Activated T-helper 2 cell treated with anti-CD3 and anti-CD28 coated beads, Interferon-gamma antibody, Interleukin-2, Interleukin-4, amounts not matched to agents 10 μg/mL and 5 μg/mL and 100 μg/mL, durations not matched to agents 14 hours and 24 hours and 36 hours (primary cell): ENCODE measurements at regions of chr9 and their contacts with region 1.

Region 1: GRCh38 chr9:129413537-129414376 is 207.1 kb downstream of the C9orf50 start:
- DNase-seq: peak; percentile 97
- H3K4me3 Mint-ChIP-seq: peak overlapping the region; percentile 78
- H3K27ac Mint-ChIP-seq: peak overlapping the region; percentile 96
- H3K4me1 Mint-ChIP-seq: peaks cover 6% of the 10 kb centered on the region
- H3K27me3 Mint-ChIP-seq: no peaks in the 10 kb centered on the region

Region 2: GRCh38 chr9:129110740-129111527 is 302.8 kb before region 1 on chr9 and contains the starts of genes CRAT and PTPA:
- intact Hi-C with region 1: loop called (anchors 1 kb)
- DNase-seq: peak; percentile 90
- H3K4me3 Mint-ChIP-seq: peak within 1 kb of the TSS; percentile 95
- H3K27ac Mint-ChIP-seq: peak within 1 kb of the TSS; percentile 96
- H3K4me1 Mint-ChIP-seq: peaks cover 21% of the 10 kb centered on the region
- H3K27me3 Mint-ChIP-seq: no peaks in the 10 kb centered on the region
- total RNA-seq, gene CRAT: 13.6 and 14.3 TPM in 2 replicates
- total RNA-seq, gene PTPA: 106 and 112 TPM in 2 replicates

Region 3: GRCh38 chr9:129139993-129140396 is 273.8 kb before region 1 on chr9:
- intact Hi-C with region 1: loop called (anchors 1 kb)
- DNase-seq: peak; percentile 77
- H3K4me3 Mint-ChIP-seq: peak overlapping the region; percentile 86
- H3K27ac Mint-ChIP-seq: peak overlapping the region; percentile 97
- H3K4me1 Mint-ChIP-seq: peaks cover 37% of the 10 kb centered on the region
- H3K27me3 Mint-ChIP-seq: no peaks in the 10 kb centered on the region

Region 4: GRCh38 chr9:129460323-129461261 is 46.8 kb after region 1 on chr9:
- intact Hi-C with region 1: loop called (anchors 2 kb)
- DNase-seq: peak; percentile 81
- H3K4me3 Mint-ChIP-seq: peak overlapping the region; percentile 74
- H3K27ac Mint-ChIP-seq: peak overlapping the region; percentile 88
- H3K4me1 Mint-ChIP-seq: peaks cover 32% of the 10 kb centered on the region
- H3K27me3 Mint-ChIP-seq: peaks cover 3% of the 10 kb centered on the region

Region 5: DNA sequence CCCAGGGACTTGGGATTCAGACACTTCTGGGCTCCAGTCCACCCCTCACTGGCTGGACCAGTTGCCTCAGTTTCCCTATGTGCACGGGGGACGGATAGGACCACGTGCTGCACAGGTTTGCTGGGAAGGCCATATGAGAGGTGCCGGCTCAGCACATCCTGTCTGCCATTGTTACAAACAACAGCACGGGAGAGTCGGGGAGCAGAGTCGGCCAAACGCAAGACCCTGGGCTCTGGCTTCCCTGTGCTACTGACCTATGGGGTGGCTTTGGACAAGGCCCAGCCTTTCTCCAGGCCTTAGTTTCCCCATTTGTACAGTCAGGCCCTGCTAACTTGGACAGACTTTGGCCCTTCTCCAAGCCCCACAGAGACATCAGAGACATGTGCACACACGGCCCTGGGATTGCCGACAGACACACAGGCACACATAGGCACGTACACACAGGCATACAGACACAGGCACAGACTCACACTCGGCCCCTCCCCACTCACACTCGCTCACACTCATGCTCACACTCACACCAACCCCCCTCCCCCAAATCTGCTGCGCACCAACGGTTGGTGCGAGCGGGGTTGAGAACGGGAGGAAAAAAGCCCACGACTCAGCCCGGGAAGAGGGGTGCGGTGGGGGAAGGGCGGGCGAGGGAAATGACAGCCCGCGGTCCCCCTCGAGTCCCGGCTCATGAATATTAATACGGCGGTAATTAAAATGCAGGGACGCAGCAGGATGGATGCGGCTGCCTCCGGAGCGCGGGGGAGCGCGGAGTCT is 74.1 kb after region 1 on chr9:
- intact Hi-C with region 1: loop called (anchors 2 kb)
- DNase-seq: peak; percentile 28
- H3K4me3 Mint-ChIP-seq: peak overlapping the region; percentile 91
- H3K27ac Mint-ChIP-seq: peak overlapping the region; percentile 100
- H3K4me1 Mint-ChIP-seq: peaks cover 52% of the 10 kb centered on the region
- H3K27me3 Mint-ChIP-seq: no peaks in the 10 kb centered on the region

Region 6: GRCh38 chr9:129584136-129584535 is 170.4 kb after region 1 on chr9:
- intact Hi-C with region 1: loop called (anchors 5 kb)
- DNase-seq: peak; percentile 61
- H3K4me3 Mint-ChIP-seq: no peak overlapping the region
- H3K27ac Mint-ChIP-seq: peak overlapping the region; percentile 77
- H3K4me1 Mint-ChIP-seq: peaks cover 67% of the 10 kb centered on the region
- H3K27me3 Mint-ChIP-seq: peaks cover 5% of the 10 kb centered on the region

Region 7: DNA sequence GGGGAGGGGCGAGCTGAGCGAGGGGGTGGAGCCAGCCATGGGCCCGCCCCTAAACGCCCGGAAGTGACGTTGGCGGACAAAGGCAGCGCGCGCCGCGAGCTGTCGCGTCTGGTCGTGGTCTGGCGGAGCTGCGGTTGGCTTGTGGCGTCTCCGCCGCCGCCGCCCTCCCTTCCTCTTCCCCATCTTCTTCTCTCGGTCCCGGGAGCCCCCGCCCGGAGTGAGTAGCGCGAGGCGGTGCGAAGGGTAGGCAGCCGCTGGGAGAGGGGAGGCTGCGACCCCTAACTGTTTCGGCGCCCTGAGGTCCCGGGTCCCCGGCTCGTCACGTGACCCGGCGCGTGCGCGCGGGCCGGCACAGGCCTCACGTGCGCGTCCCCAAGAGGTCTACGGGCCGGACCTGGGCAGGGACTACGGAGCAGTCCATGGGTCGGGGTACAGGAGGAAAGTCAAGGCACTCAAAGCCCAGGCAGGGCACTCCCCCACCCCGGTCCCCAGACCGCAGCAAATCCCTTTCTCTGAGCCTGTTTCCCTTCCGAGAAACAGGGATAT is 212.4 kb after region 1 on chr9 and contains the start of gene NTMT1:
- intact Hi-C with region 1: loop called (anchors 1 kb)
- DNase-seq: peak; percentile 88
- H3K4me3 Mint-ChIP-seq: peak within 1 kb of the TSS; percentile 85
- H3K27ac Mint-ChIP-seq: peak within 1 kb of the TSS; percentile 96
- H3K4me1 Mint-ChIP-seq: peaks cover 45% of the 10 kb centered on the region
- H3K27me3 Mint-ChIP-seq: peaks cover 5% of the 10 kb centered on the region
- total RNA-seq, gene NTMT1: 58.4 and 61.5 TPM in 2 replicates

Region 8: DNA sequence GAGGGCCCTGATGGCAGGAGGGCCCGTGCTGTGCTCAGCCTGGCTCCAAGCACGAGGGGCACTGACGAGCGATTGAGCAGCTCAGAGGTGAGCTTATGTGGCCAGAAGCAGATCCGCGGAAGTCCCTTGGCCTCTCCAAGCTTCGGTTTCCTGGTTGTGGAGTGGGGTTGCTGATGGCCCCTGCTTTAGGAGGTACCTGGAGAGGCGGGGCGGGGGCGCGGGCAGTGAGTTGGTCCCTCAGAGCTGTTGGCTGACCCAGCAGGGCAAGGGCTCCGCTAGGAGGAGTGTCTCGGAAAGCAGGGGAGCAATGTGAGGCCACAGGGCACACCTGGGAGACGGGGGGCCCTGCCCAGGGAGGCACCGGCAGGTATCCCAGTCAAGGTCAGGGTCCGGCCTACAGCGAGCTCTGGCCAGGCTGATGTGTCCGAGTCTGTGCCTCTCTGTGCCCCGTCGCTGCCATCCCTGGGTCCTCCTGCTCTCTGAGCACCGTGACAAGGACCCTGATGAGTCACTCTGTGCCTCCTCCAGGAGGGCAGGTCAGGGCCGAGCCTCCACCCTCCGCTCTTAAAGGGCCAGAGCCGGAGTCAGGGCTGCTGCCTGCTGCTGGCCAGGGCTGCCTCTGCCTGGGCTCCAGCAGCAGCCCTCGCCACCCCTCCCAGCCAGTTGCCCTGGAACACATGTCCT is 773.2 kb after region 1 on chr9:
- intact Hi-C with region 1: no loop called
- DNase-seq: no peak
- H3K4me3 Mint-ChIP-seq: no peak overlapping the region
- H3K27ac Mint-ChIP-seq: no peak overlapping the region
- H3K4me1 Mint-ChIP-seq: no peaks in the 10 kb centered on the region
- H3K27me3 Mint-ChIP-seq: no peaks in the 10 kb centered on the region